Gastrocnemius medialis (tissue), 4 donors: ENCODE measurements at regions of chr15 and their contacts with region 1.

Region 1: GRCh38 chr15:76196269-76197231 is 114.7 kb downstream of the ETFA start:
- DNase-seq: peak; percentile 80 to 92
- ATAC-seq: peak; percentile 71 to 73
- H3K4me3 ChIP-seq: no peak overlapping the region
- H3K27ac ChIP-seq: peak overlapping the region; percentile 93 to 96 (median 94)
- H3K4me1 ChIP-seq: peaks cover 51 to 58% of the 10 kb centered on the region in 2 donors
- H3K27me3 ChIP-seq: no peaks in the 10 kb centered on the region
- CTCF ChIP-seq: no peak
- POLR2A ChIP-seq: peak; percentile 37 to 39

Region 2: GRCh38 chr15:76185716-76186115 is 10.8 kb before region 1 on chr15:
- in situ Hi-C with region 1: no loop called
- intact Hi-C with region 1: loop called (anchors 2 kb)
- DNase-seq: peak in 1 of 2 donors; percentile 60
- ATAC-seq: peak; percentile 9 to 34
- H3K4me3 ChIP-seq: no peak overlapping the region
- H3K27ac ChIP-seq: peak overlapping the region in 2 of 4 donors; percentile 19 to 98
- H3K4me1 ChIP-seq: peaks cover 11 to 50% of the 10 kb centered on the region in 2 donors
- H3K27me3 ChIP-seq: no peaks in the 10 kb centered on the region
- CTCF ChIP-seq: peak in 3 of 5 experiments; percentile 28 to 61 (median 44)
- POLR2A ChIP-seq: no peak

Region 3: GRCh38 chr15:76311100-76311953 is 114.8 kb after region 1 on chr15 and contains the start of gene ETFA:
- in situ Hi-C with region 1: loop called in 1 of 4 experiments (anchors 10 kb)
- intact Hi-C with region 1: loop called (anchors 2 kb)
- DNase-seq: peak; percentile 96 to 98
- ATAC-seq: peak; percentile 93 to 95
- H3K4me3 ChIP-seq: peak within 1 kb of the TSS; percentile 74 to 97 (median 78)
- H3K27ac ChIP-seq: peak within 1 kb of the TSS; percentile 87 to 94 (median 90)
- H3K4me1 ChIP-seq: peaks cover 27 to 31% of the 10 kb centered on the region in 2 donors
- H3K27me3 ChIP-seq: no peaks in the 10 kb centered on the region
- CTCF ChIP-seq: no peak
- POLR2A ChIP-seq: peak; percentile 98 to 99
- total RNA-seq, gene ETFA: 179 to 261 (median 227) TPM

Region 4: DNA sequence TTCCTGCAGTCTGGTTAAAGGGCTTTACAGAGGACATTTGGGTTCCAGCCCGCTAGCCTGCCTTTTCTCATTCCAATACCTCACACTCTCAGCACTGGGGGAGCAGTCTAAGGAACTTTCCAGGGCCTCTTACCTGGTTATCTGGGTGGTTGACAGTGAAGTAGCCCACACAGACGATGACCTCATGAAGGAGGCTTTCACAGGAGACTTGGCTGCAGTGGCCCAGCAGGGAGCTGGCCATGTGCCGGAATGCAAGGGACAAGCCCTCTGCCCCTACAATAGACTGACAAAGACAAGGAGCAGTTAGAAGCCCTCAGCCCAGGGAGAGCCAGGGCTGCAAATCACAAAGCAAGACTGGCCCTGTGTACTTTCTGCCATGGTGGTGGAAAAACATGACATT is 179.5 kb after region 1 on chr15:
- in situ Hi-C with region 1: no loop called
- intact Hi-C with region 1: no loop called
- DNase-seq: no peak
- ATAC-seq: no peak
- H3K4me3 ChIP-seq: no peak overlapping the region
- H3K27ac ChIP-seq: no peak overlapping the region
- H3K4me1 ChIP-seq: no peaks in the 10 kb centered on the region
- H3K27me3 ChIP-seq: no peaks in the 10 kb centered on the region
- CTCF ChIP-seq: no peak
- POLR2A ChIP-seq: no peak